Gastrocnemius medialis (tissue), 4 donors: ENCODE measurements at regions of chr20 and their contacts with region 1.

Region 1: GRCh38 chr20:4750381-4750780 is 28.7 kb downstream of the PRND start:
- DNase-seq: no peak
- ATAC-seq: no peak
- H3K4me3 ChIP-seq: no peak overlapping the region
- H3K27ac ChIP-seq: no peak overlapping the region
- H3K4me1 ChIP-seq: no peaks in the 10 kb centered on the region
- H3K27me3 ChIP-seq: no peaks in the 10 kb centered on the region
- CTCF ChIP-seq: no peak
- POLR2A ChIP-seq: no peak

Region 2: DNA sequence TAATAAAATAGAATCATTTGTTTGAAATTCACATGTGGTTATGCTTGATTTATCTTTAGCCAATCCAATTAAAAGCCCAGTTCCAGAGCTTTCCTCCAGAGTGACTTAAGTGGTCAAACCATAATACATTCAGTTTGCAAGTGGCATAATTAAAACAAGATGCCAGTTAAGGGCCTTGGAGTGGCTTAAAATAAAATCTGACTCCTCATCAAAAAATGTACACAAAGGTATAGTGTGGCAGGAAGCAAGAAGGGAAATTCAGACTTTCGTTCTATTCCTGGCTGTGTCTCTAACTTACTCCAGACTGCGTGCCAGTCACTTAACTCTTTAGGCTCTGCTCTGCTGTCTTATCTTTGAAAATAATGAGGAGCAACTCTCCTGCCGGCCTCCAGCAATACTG is 280.0 kb before region 1 on chr20:
- in situ Hi-C with region 1: no loop called
- intact Hi-C with region 1: no loop called
- DNase-seq: no peak
- ATAC-seq: no peak
- H3K4me3 ChIP-seq: no peak overlapping the region
- H3K27ac ChIP-seq: no peak overlapping the region
- H3K4me1 ChIP-seq: no peaks in the 10 kb centered on the region
- H3K27me3 ChIP-seq: no peaks in the 10 kb centered on the region
- CTCF ChIP-seq: no peak
- POLR2A ChIP-seq: no peak

Region 3: GRCh38 chr20:4697189-4697833 is 53.1 kb before region 1 on chr20:
- in situ Hi-C with region 1: no loop called
- intact Hi-C with region 1: no loop called
- DNase-seq: no peak
- ATAC-seq: no peak
- H3K4me3 ChIP-seq: no peak overlapping the region
- H3K27ac ChIP-seq: no peak overlapping the region
- H3K4me1 ChIP-seq: peaks cover 5 to 6% of the 10 kb centered on the region in 2 donors
- H3K27me3 ChIP-seq: no peaks in the 10 kb centered on the region
- CTCF ChIP-seq: no peak
- POLR2A ChIP-seq: no peak

Region 4: GRCh38 chr20:5090191-5090590 is 339.8 kb after region 1 on chr20:
- in situ Hi-C with region 1: loop called in 1 of 4 experiments (anchors 10 kb)
- intact Hi-C with region 1: no loop called
- DNase-seq: peak in 1 of 2 donors; percentile 8
- ATAC-seq: peak; percentile 44 to 66
- H3K4me3 ChIP-seq: no peak overlapping the region
- H3K27ac ChIP-seq: peak overlapping the region; percentile 3 to 52 (median 44)
- H3K4me1 ChIP-seq: no peaks in the 10 kb centered on the region
- H3K27me3 ChIP-seq: no peaks in the 10 kb centered on the region
- CTCF ChIP-seq: no peak
- POLR2A ChIP-seq: peak; percentile 17 to 30